Adrenal gland (tissue), 19 donors: ENCODE measurements at regions of chr3 and their contacts with region 1.

Region 1: GRCh38 chr3:115783938-115784738 is 160.8 kb downstream of the GAP43 start:
- DNase-seq: peak; percentile 94 to 97 (median 95)
- H3K4me3 ChIP-seq: peak overlapping the region in 3 of 4 donors; percentile 24 to 65 (median 60)
- H3K27ac ChIP-seq: peak overlapping the region; percentile 84 to 96 (median 88)
- H3K4me1 ChIP-seq: peaks cover 0 to 9% of the 10 kb centered on the region in 2 donors
- H3K27me3 ChIP-seq: no peaks in the 10 kb centered on the region
- CTCF ChIP-seq: peak; percentile 80 to 98 (median 93)
- POLR2A ChIP-seq: peak; percentile 66 to 82

Region 2: GRCh38 chr3:115217678-115218451 is 566.3 kb before region 1 on chr3:
- intact Hi-C with region 1: loop called (anchors 10 kb)
- DNase-seq: peak in 5 of 7 donors; percentile 27 to 40 (median 35)
- H3K4me3 ChIP-seq: no peak overlapping the region
- H3K27ac ChIP-seq: no peak overlapping the region
- H3K4me1 ChIP-seq: peaks cover 0 to 6% of the 10 kb centered on the region in 2 donors
- H3K27me3 ChIP-seq: no peaks in the 10 kb centered on the region
- CTCF ChIP-seq: peak; percentile 60 to 80 (median 74)
- POLR2A ChIP-seq: no peak

Region 3: GRCh38 chr3:115692887-115693524 is 91.1 kb before region 1 on chr3:
- intact Hi-C with region 1: loop called (anchors 5 to 10 kb)
- DNase-seq: peak; percentile 70 to 94 (median 81)
- H3K4me3 ChIP-seq: no peak overlapping the region
- H3K27ac ChIP-seq: peak overlapping the region in 1 of 5 donors; percentile 41
- H3K4me1 ChIP-seq: no peaks in the 10 kb centered on the region
- H3K27me3 ChIP-seq: no peaks in the 10 kb centered on the region
- CTCF ChIP-seq: peak; percentile 61 to 91 (median 86)
- POLR2A ChIP-seq: no peak

Region 4: DNA sequence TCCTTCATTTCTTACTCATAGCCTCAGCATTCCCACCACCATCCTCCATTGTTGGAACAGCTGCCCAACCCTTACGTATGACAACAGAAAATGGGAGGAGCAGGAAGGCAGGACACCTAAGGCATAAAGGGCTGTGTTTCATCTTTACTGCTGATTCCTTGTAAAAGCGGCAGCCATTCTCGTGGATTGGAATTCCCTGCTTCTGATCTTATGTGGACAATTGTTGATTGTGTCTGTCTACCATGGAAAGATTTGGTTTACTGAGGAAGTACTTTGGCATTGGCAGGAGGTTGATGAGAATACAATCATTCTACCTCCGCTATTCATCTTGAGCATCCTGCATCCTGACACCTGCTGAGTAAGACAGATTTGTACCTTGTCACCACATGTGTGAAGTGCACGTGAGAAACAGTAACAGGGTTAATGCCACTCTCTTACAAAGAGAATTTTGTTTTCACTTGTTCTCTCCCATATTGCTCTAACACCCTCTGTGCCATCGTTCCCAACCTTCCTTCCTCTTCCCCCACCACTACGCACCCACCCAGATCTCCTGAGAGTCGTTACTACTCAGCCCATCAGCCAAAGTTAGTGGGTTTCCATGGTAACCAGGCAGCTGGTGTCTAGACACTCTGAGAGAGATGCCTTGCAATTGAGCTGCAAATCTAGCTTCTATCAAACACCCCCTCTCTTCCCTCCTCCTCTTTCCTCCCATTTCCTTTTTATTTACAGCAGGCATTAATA is 85.1 kb before region 1 on chr3:
- intact Hi-C with region 1: loop called (anchors 5 to 10 kb)
- DNase-seq: no peak
- H3K4me3 ChIP-seq: no peak overlapping the region
- H3K27ac ChIP-seq: no peak overlapping the region
- H3K4me1 ChIP-seq: no peaks in the 10 kb centered on the region
- H3K27me3 ChIP-seq: no peaks in the 10 kb centered on the region
- CTCF ChIP-seq: no peak
- POLR2A ChIP-seq: no peak

Region 5: DNA sequence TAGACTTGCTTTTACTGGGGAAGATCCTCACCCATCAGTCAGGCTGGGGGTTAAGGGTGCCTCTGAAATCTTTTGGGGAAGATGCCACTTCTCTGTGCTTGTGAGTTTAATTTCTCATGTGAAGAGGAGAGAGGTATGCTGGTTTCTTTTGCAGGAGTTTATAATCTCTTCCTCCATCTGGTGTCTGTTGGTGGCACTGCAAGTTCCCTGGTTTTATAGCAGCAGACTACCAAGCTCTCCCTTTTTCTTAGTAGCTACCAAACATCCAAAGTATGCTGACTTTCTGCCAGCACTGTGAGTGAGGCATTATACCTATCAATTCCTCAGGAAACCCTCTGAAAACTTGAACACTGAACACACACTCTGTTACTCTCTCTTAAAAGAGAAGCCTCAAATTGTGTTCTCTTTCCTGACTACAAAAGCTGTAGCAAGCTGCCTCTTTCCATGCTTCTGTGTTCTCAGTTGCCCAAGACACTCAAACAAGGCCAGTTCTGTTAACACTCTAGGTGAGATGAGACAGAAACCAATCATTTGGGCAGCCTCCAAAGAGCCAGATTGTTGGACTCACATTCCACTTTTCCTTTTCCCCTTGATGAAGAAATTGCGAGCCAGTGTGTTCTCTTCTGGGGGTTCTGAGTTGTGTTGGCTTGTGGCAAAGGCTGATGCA is 138.7 kb after region 1 on chr3:
- intact Hi-C with region 1: no loop called
- DNase-seq: peak in 1 of 7 donors; percentile 4
- H3K4me3 ChIP-seq: no peak overlapping the region
- H3K27ac ChIP-seq: no peak overlapping the region
- H3K4me1 ChIP-seq: no peaks in the 10 kb centered on the region
- H3K27me3 ChIP-seq: no peaks in the 10 kb centered on the region
- CTCF ChIP-seq: peak in 1 of 6 experiments; percentile 22
- POLR2A ChIP-seq: no peak

Region 6: DNA sequence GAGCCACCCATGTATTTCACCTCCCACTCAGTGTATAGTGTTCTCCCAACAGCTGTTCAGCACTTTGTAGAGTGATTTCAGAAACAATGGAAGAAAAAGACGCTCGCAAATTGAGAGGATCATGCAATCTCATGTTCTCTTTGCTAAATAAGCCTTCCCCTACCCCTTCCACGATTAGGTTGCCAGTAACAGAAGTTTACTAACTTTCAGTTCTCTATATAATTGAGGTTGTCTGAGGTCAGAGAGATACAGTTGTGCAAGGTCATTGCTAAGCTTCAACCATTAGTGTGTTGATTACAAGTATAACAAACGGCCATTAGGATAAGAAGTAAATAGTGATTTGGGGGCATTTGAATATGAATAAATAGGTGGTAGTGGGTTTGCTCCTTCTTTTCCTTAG is 1025.1 kb after region 1 on chr3:
- intact Hi-C with region 1: no loop called
- DNase-seq: no peak
- H3K4me3 ChIP-seq: no peak overlapping the region
- H3K27ac ChIP-seq: no peak overlapping the region
- H3K4me1 ChIP-seq: no peaks in the 10 kb centered on the region
- H3K27me3 ChIP-seq: no peaks in the 10 kb centered on the region
- CTCF ChIP-seq: no peak
- POLR2A ChIP-seq: no peak